Breast epithelium (tissue), 4 donors: ENCODE measurements at regions of chr1 and their contacts with region 1.

Region 1: GRCh38 chr1:170162459-170163246 is 16.9 kb downstream of the NTMT2 start:
- DNase-seq: peak in 1 of 2 donors; percentile 35
- H3K4me3 ChIP-seq: no peak overlapping the region
- H3K27ac ChIP-seq: peak overlapping the region; percentile 2 to 5
- H3K4me1 ChIP-seq: no peaks in the 10 kb centered on the region
- H3K27me3 ChIP-seq: no peaks in the 10 kb centered on the region
- CTCF ChIP-seq: no peak
- POLR2A ChIP-seq: no peak

Region 2: GRCh38 chr1:170126696-170127095 is 36.0 kb before region 1 on chr1:
- intact Hi-C with region 1: no loop called
- DNase-seq: no peak
- H3K4me3 ChIP-seq: no peak overlapping the region
- H3K27ac ChIP-seq: no peak overlapping the region
- H3K4me1 ChIP-seq: no peaks in the 10 kb centered on the region
- H3K27me3 ChIP-seq: no peaks in the 10 kb centered on the region
- CTCF ChIP-seq: no peak
- POLR2A ChIP-seq: no peak

Region 3: DNA sequence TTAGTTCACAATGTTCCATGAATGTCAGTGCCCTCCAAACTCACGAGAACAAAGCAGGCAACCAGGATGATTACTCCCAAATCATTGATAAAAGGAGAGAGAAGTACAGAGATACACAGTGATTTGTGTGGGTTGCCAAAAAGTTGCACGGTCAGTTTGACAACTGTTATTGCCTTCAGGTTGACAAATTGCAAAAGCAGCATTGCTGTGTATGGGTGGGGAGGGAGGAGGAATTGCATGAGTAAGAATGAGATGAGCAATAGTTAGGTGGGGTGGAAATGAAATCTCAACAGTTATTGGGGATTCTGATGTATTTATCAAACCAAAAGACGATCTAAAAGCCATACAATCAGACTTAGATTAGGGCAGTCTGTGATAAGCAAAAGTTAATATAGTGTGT is 76.8 kb after region 1 on chr1:
- intact Hi-C with region 1: loop called (anchors 2 kb)
- DNase-seq: no peak
- H3K4me3 ChIP-seq: no peak overlapping the region
- H3K27ac ChIP-seq: no peak overlapping the region
- H3K4me1 ChIP-seq: no peaks in the 10 kb centered on the region
- H3K27me3 ChIP-seq: no peaks in the 10 kb centered on the region
- CTCF ChIP-seq: no peak
- POLR2A ChIP-seq: no peak